Activated CD8-positive, alpha-beta memory T cell treated with anti-CD3 and anti-CD28 coated beads, Interleukin-2, amount 10 ng/mL, durations not matched to agents 7 days and 5 days (primary cell): ENCODE measurements at regions of chr11 and their contacts with region 1.

Region 1: DNA sequence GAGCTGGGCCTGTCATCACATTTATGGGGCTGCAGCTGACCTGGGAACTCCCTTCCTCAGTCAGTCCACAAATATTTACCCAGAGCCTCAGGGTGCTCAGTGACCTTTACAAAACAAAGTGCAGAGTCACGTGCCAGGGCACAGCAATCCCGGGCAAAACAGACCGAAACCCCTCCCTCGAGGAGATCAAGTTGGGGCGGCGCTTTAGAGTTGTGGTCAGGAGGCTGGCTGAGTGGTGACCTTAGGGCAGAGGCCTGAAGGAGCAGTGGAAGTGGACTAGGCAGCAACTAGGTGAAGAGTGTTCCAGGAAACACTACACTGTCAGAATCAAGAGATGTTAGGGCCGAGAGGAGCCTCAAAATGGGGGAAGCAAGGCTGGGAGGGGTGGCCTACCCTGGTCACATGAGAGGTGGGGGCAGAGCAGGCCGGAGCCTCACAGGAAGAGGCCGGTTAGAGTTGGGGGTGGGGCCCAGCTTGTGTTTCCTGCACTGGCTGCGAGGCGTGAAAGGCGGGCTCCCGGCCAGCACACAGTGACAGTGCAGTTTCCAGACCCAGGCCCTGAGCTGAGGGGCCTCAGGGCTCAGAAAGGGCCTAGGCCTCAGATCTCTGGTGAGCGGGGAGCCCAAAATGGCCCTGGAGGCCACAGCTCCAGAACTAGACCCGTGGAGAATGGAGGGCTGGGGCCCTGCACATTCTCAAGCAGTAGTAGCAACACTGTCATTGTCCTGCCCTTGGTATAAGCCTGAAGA is 3.7 kb upstream of the NEAT1 start:
- DNase-seq: peak; percentile 98
- ATAC-seq: peak; percentile 42
- H3K4me3 Mint-ChIP-seq: peak overlapping the region; percentile 94
- H3K27ac Mint-ChIP-seq: peak overlapping the region; percentile 98
- H3K4me1 Mint-ChIP-seq: peaks cover 53% of the 10 kb centered on the region
- H3K27me3 Mint-ChIP-seq: peaks cover 2% of the 10 kb centered on the region

Region 2: GRCh38 chr11:65401073-65401802 is 17.6 kb before region 1 on chr11:
- CTCF ChIA-PET with region 1: interaction called, 12 read pairs
- DNase-seq: no peak
- ATAC-seq: no peak
- H3K4me3 Mint-ChIP-seq: no peak overlapping the region
- H3K27ac Mint-ChIP-seq: no peak overlapping the region
- H3K4me1 Mint-ChIP-seq: no peaks in the 10 kb centered on the region
- H3K27me3 Mint-ChIP-seq: no peaks in the 10 kb centered on the region

Region 3: DNA sequence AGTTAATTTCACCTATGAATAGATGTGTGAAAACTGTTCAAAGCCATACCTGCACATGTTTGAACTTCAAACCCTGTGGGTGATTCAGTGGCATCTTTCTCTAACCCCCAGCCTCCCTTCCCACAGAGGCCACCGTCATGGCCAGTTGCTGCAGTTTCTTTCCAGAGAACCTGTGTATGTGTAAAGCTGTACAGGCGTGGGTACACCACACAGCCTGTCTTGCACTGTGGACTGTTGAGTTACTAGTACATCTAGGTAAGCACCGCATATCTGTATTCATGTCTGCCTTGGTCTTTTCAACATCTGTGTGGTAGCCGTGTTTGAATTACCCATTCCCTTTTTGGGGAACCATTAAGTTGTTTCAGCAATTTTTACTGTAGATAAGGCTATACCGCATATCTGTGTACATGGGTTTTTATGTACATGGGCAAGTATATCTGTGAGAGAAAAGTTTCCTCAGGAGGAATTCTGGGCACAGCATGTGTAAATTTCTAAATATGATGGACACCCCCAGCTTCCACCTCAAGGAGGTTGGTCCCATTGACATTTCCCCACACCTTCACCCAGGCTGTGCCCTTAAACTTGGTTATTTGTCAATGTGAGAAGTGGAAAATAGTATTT is 17.6 kb after region 1 on chr11:
- CTCF ChIA-PET with region 1: interaction called, 24 read pairs
- DNase-seq: peak; percentile 39
- ATAC-seq: no peak
- H3K4me3 Mint-ChIP-seq: no peak overlapping the region
- H3K27ac Mint-ChIP-seq: peak overlapping the region; percentile 44
- H3K4me1 Mint-ChIP-seq: peaks cover 84% of the 10 kb centered on the region
- H3K27me3 Mint-ChIP-seq: no peaks in the 10 kb centered on the region

Region 4: GRCh38 chr11:65477149-65477965 is 58.5 kb after region 1 on chr11:
- CTCF ChIA-PET with region 1: interaction called, 80 read pairs
- DNase-seq: peak; percentile 94
- ATAC-seq: peak; percentile 90
- H3K4me3 Mint-ChIP-seq: peak overlapping the region; percentile 83
- H3K27ac Mint-ChIP-seq: peak overlapping the region; percentile 95
- H3K4me1 Mint-ChIP-seq: peaks cover 20% of the 10 kb centered on the region
- H3K27me3 Mint-ChIP-seq: peaks cover 2% of the 10 kb centered on the region